Heart right ventricle (tissue), 16 donors: ENCODE measurements at regions of chr2 and their contacts with region 1.

Region 1: DNA sequence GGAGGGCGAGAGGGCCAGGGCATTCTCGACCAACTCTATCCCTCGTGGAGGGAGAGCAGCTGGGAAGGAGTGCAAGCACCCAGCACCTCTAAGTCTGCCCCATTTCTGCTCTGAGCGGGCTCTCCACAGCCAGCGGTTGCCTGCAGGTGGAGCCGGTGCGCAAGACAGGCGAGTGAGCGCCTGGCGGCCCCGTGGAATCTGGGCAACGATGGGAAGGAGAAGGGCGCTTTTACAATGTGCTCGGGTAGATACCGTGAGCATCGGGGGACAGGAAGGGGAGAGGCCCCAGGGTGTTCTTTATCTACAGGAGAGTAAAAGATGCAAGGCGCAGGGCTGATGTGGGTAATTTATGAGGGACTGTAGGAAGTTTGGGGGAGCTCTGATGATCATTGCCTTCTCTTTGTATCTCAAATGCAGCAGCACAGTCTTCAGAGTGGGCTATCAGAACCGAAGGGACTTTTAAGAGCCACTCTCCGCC is 867 bp upstream of the TTL start:
- DNase-seq: peak; percentile 81 to 83
- ATAC-seq: peak; percentile 85 to 97 (median 90)
- H3K4me3 ChIP-seq: peak overlapping the region; percentile 54 to 94 (median 84)
- H3K27ac ChIP-seq: peak overlapping the region; percentile 57 to 92 (median 90)
- H3K4me1 ChIP-seq: peaks cover 9 to 33% (median 24%) of the 10 kb centered on the region in 9 donors
- H3K27me3 ChIP-seq: no peaks in the 10 kb centered on the region
- CTCF ChIP-seq: peak; percentile 64 to 93 (median 83)

Region 2: GRCh38 chr2:112529757-112530156 is 48.7 kb after region 1 on chr2:
- intact Hi-C with region 1: loop called in 2 of 10 experiments (anchors 10 kb)
- DNase-seq: no peak
- ATAC-seq: peak in 1 of 8 donors; percentile 35
- H3K4me3 ChIP-seq: no peak overlapping the region
- H3K27ac ChIP-seq: no peak overlapping the region
- H3K4me1 ChIP-seq: peaks cover 0 to 14% (median 0%) of the 10 kb centered on the region in 9 donors
- H3K27me3 ChIP-seq: no peaks in the 10 kb centered on the region
- CTCF ChIP-seq: no peak

Region 3: GRCh38 chr2:112542123-112542983 is 61.3 kb after region 1 on chr2 and contains the start of gene POLR1B:
- intact Hi-C with region 1: loop called in 8 of 10 experiments (anchors 5 to 10 kb)
- DNase-seq: peak; percentile 82 to 87
- ATAC-seq: peak; percentile 95 to 98 (median 96)
- H3K4me3 ChIP-seq: peak within 1 kb of the TSS; percentile 70 to 99 (median 80)
- H3K27ac ChIP-seq: peak within 1 kb of the TSS; percentile 65 to 96 (median 88)
- H3K4me1 ChIP-seq: peaks cover 5 to 24% (median 17%) of the 10 kb centered on the region in 9 donors
- H3K27me3 ChIP-seq: no peaks in the 10 kb centered on the region
- CTCF ChIP-seq: peak in 1 of 9 donors; percentile 9
- total RNA-seq, gene POLR1B: 6.4 to 15.3 (median 11.0) TPM